Activated T-helper 2 cell treated with anti-CD3 and anti-CD28 coated beads, Interferon-gamma antibody, Interleukin-2, Interleukin-4, amounts not matched to agents 10 μg/mL and 5 μg/mL and 100 μg/mL, durations not matched to agents 14 hours and 24 hours and 36 hours (primary cell): ENCODE measurements at regions of chr17 and their contacts with region 1.

Region 1: GRCh38 chr17:50200457-50201275 is 765 bp downstream of the COL1A1 start:
- DNase-seq: peak; percentile 80
- H3K4me3 Mint-ChIP-seq: peak overlapping the region; percentile 80
- H3K27ac Mint-ChIP-seq: peak overlapping the region; percentile 19
- H3K4me1 Mint-ChIP-seq: peaks cover 19% of the 10 kb centered on the region
- H3K27me3 Mint-ChIP-seq: peaks cover 40% of the 10 kb centered on the region

Region 2: DNA sequence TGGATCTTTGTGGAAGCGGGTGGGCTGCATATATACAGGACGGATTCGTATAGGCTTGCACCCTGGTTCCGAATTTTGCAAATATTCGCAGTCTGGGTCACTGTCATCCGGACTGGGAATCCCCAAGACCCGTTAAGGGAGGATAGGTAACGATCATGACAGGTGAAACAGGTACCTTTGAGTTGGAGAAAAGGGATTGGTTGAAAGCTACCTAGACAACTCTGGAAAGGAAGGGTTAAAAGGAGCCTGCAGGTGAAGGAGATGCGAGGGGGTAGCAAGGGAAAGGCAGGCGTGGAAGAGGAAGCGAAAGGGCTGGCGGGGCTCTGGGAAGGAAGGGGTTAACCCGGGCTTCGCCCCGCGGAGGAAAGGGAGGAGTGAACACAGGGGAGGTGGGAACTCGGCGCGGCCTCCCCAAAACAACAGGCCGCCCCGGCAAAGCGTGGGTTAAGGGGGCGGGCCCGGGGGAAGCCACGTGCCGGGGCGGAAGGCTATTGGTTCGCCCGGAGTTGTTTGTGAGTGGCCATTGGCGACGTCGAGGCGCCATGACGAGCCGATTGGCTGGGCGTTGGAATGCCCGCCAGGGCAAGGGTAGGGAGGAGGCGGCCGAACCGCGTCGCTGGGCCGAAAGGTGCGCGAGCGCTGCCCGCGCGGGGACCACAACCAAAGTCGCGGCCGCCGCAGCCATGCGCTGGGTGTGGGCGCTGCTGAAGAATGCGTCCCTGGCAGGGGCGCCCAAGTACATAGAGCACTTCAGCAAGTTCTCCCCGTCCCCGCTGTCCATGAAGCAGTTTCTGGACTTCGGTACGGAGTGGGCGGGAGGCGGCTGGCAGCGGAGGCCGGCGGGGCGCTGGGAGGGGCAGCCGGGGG is 105.7 kb before region 1 on chr17 and contains the start of gene PDK2:
- intact Hi-C with region 1: no loop called
- DNase-seq: peak; percentile 95
- H3K4me3 Mint-ChIP-seq: peak within 1 kb of the TSS; percentile 86
- H3K27ac Mint-ChIP-seq: peak within 1 kb of the TSS; percentile 79
- H3K4me1 Mint-ChIP-seq: peaks cover 13% of the 10 kb centered on the region
- H3K27me3 Mint-ChIP-seq: no peaks in the 10 kb centered on the region
- total RNA-seq, gene PDK2: 11.0 and 12.1 TPM in 2 replicates

Region 3: GRCh38 chr17:50169121-50169764 is 31.4 kb before region 1 on chr17:
- intact Hi-C with region 1: loop called (anchors 1 kb)
- DNase-seq: peak; percentile 61
- H3K4me3 Mint-ChIP-seq: peak overlapping the region; percentile 17
- H3K27ac Mint-ChIP-seq: peak overlapping the region; percentile 47
- H3K4me1 Mint-ChIP-seq: peaks cover 15% of the 10 kb centered on the region
- H3K27me3 Mint-ChIP-seq: no peaks in the 10 kb centered on the region

Region 4: GRCh38 chr17:50297407-50297865 is 96.8 kb after region 1 on chr17:
- intact Hi-C with region 1: loop called (anchors 1 kb)
- DNase-seq: peak; percentile 72
- H3K4me3 Mint-ChIP-seq: no peak overlapping the region
- H3K27ac Mint-ChIP-seq: peak overlapping the region; percentile 86
- H3K4me1 Mint-ChIP-seq: peaks cover 35% of the 10 kb centered on the region
- H3K27me3 Mint-ChIP-seq: no peaks in the 10 kb centered on the region

Region 5: DNA sequence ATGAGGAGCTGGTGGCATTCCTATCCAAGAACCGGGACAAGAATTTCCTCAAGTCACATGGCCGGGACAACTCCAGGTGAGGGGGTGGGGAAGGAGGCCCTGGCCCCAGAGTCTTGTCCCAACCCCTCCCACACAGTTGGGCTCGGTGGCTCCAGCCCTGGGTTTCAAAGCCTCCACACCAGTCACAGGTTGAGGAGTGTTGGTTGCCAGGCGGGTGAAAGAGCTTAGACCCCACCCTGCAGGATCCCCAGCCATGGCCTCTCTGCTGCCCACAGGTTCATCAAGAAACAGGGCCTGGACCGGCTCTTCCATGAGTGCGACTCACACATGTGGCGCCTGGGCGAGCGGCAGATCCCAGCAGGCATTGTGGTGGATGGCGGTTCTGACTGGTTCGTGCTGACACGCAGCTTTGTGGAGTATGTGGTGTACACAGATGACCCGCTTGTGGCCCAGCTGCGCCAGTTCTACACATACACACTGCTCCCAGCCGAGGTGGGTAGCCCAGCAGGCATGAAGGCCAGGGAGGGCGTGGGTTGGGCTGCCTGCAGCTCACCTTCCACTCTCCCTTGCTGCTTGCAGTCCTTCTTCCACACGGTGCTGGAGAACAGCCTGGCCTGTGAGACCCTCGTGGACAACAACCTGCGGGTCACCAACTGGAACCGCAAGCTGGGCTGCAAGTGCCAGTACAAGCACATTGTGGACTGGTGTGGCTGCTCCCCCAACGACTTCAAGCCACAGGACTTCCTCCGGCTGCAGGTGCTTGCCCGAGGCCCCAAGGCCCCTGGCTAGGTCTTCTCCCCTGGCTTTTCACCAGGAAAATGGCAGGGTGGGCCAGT is 155.1 kb after region 1 on chr17:
- intact Hi-C with region 1: no loop called
- DNase-seq: no peak
- H3K4me3 Mint-ChIP-seq: no peak overlapping the region
- H3K27ac Mint-ChIP-seq: no peak overlapping the region
- H3K4me1 Mint-ChIP-seq: peaks cover 4% of the 10 kb centered on the region
- H3K27me3 Mint-ChIP-seq: no peaks in the 10 kb centered on the region

Region 6: GRCh38 chr17:50397111-50397918 is 196.6 kb after region 1 on chr17 and contains the start of gene LRRC59:
- intact Hi-C with region 1: loop called (anchors 1 kb)
- DNase-seq: peak; percentile 92
- H3K4me3 Mint-ChIP-seq: peak within 1 kb of the TSS; percentile 99
- H3K27ac Mint-ChIP-seq: peak within 1 kb of the TSS; percentile 97
- H3K4me1 Mint-ChIP-seq: peaks cover 24% of the 10 kb centered on the region
- H3K27me3 Mint-ChIP-seq: no peaks in the 10 kb centered on the region
- total RNA-seq, gene LRRC59: 118 and 119 TPM in 2 replicates

Region 7: GRCh38 chr17:52064791-52065211 is 1864.1 kb after region 1 on chr17:
- intact Hi-C with region 1: no loop called
- DNase-seq: no peak
- H3K4me3 Mint-ChIP-seq: no peak overlapping the region
- H3K27ac Mint-ChIP-seq: no peak overlapping the region
- H3K4me1 Mint-ChIP-seq: no peaks in the 10 kb centered on the region
- H3K27me3 Mint-ChIP-seq: no peaks in the 10 kb centered on the region